ENCODE measurements at regions of chr11 and their contacts with region 1.

Region 1: DNA sequence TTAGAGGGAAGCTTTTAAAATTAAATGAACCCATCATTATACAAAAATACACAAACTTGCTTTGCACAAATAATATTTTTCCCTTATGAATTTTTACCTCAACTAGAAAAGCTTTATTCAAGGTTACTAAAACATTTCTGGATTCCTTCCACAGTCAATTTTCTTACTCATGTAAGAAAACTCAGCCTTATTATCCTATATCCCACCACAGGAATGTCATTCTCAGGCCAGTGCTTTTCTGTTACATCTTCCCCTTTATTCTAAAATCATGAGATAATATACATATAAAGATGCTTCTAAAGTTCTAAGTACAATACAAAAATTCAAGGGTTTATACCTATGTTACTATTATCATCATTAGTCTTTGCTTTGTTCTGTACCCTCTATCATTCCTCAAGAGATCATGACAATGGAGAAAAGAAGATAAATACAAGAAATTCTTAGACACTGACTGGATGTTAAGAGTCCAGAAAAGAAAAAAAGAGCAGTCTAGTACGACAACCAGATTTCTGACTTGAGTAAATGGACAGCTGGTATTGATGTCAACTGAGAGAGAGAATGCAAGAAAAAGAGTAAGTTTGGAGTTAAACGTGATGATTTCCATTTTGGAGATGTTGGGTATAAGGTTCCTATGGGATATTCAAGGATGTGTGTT is 60.3 kb downstream of the MTMR2 start:
- DNase-seq: no peak

Region 2: DNA sequence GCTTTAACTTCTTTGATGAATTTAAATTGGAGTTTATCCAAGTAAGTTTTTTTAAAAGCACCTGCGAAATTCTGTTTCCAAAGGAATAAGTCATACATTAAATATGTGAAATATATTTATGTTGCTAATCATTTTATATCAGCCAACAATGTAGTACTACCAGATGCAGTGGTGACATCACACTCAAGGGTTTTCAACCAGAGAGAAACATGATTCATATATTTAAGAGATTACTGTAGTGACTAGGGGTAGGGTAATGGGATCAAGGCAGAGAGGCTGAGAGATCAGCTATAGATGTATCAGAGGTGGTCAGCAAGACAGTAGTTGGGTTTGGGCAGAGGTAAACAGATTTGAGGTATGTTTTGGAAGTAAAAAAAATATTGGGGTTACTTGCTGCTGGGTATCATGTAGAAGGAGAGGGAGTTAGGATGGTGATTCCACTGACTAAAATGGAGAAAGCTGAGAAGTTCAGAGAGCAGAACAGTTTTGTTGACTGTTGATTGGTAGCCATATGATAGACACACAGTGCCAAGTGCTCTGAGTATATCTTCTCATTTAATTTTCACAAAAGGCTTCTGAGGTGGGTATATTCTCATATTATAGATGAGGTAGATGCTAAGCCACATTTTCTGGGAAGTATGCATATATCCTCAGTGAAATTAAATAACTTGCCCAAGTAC is 33.9 kb before region 1 on chr11:
- intact Hi-C with region 1: loop called in 1 of 2 experiments (anchors 2 kb)
- DNase-seq: no peak

Measured in posterior vena cava (tissue), 2 donors.